Psoas muscle (tissue), 8 donors: ENCODE measurements at regions of chr2 and their contacts with region 1.

Region 1: GRCh38 chr2:219057709-219058540 is 2.8 kb downstream of the IHH start:
- DNase-seq: peak; percentile 72 to 86
- ATAC-seq: peak; percentile 92 to 97 (median 96)
- H3K4me3 ChIP-seq: peak overlapping the region; percentile 19
- H3K27ac ChIP-seq: no peak overlapping the region
- H3K4me1 ChIP-seq: peaks cover 28% of the 10 kb centered on the region
- H3K27me3 ChIP-seq: peaks cover 0 to 88% (median 23%) of the 10 kb centered on the region in 3 donors
- CTCF ChIP-seq: peak; percentile 95

Region 2: GRCh38 chr2:218959141-218959731 is 98.7 kb before region 1 on chr2 and contains the start of gene CDK5R2:
- intact Hi-C with region 1: no loop called
- DNase-seq: peak; percentile 69 to 85
- ATAC-seq: peak; percentile 89 to 97 (median 96)
- H3K4me3 ChIP-seq: peak within 1 kb of the TSS; percentile 61
- H3K27ac ChIP-seq: no peak within 1 kb of the TSS
- H3K4me1 ChIP-seq: peaks cover 6% of the 10 kb centered on the region
- H3K27me3 ChIP-seq: peaks cover 0 to 91% (median 36%) of the 10 kb centered on the region in 3 donors
- CTCF ChIP-seq: no peak
- total RNA-seq, gene CDK5R2: not detected

Region 3: DNA sequence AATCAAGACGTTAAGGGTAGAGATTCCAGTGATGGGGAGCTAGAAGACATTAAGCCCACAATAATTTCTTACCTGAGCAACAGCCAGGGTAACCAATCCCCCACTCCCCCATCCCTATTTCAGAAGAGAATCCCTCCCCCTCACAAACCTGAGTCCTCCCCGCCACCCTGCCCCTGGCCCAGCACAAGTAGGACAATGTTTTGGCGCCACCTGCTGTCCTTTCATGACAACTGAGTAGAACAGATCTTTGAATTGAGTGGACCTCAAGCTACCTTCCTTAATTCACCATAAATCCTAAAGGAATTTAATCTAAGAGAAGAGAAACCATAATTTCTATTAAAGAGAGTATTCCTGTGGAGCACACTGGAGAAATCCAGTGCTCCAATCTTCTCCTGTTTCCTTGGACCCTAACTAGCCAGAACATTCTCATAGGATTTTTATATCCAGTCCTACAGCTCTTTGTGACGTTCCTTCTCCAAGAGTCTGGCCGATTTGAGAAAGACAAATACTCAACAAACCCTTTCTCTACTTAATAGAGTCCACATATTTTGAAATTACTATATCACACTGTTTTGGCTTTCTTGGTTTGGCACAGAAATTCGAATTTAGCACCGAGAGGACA is 61.6 kb after region 1 on chr2:
- intact Hi-C with region 1: loop called (anchors 1 to 2 kb)
- DNase-seq: peak; percentile 50 to 77
- ATAC-seq: peak; percentile 58 to 85 (median 74)
- H3K4me3 ChIP-seq: no peak overlapping the region
- H3K27ac ChIP-seq: no peak overlapping the region
- H3K4me1 ChIP-seq: no peaks in the 10 kb centered on the region
- H3K27me3 ChIP-seq: no peaks in the 10 kb centered on the region
- CTCF ChIP-seq: peak; percentile 67

Region 4: DNA sequence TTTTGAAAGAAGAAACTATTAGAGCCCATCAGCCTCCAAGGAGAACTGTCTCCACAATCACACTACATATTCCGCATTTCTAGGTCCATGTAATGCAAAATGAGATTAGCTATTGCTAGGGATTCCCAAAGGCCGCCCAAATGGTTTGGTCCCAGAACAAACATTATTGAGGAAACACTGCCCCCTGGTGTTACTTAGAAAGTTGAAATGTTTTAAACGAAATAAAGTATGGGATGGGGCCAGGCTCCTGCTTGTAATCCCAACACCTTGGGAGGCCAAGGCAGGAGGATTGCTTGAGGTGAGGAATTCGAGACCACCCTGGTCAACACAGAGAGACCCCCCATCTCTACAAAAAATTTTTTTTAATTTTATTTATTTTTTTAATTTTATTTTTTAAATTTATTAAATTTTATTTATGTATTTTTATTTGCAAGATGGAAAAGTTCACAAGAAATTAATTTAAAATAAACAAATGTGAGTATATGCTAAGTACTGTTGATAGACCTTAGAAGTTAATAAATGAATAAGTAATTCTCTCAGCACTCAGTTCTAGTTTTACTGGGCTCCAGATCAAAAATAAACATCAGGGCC is 97.2 kb after region 1 on chr2:
- intact Hi-C with region 1: loop called in 1 of 2 experiments (anchors 2 kb)
- DNase-seq: no peak
- ATAC-seq: peak in 3 of 4 donors; percentile 64 to 69 (median 66)
- H3K4me3 ChIP-seq: no peak overlapping the region
- H3K27ac ChIP-seq: no peak overlapping the region
- H3K4me1 ChIP-seq: peaks cover 5% of the 10 kb centered on the region
- H3K27me3 ChIP-seq: no peaks in the 10 kb centered on the region
- CTCF ChIP-seq: peak; percentile 63

Region 5: GRCh38 chr2:219308142-219309093 is 250.5 kb after region 1 on chr2:
- intact Hi-C with region 1: loop called (anchors 10 kb)
- DNase-seq: peak; percentile 71 to 78
- ATAC-seq: peak; percentile 74 to 86 (median 84)
- H3K4me3 ChIP-seq: no peak overlapping the region
- H3K27ac ChIP-seq: no peak overlapping the region
- H3K4me1 ChIP-seq: no peaks in the 10 kb centered on the region
- H3K27me3 ChIP-seq: peaks cover 0 to 88% (median 6%) of the 10 kb centered on the region in 3 donors
- CTCF ChIP-seq: no peak

Region 6: GRCh38 chr2:219362524-219363164 is 304.7 kb after region 1 on chr2:
- intact Hi-C with region 1: no loop called
- DNase-seq: peak; percentile 78 to 90
- ATAC-seq: peak; percentile 97 to 99 (median 98)
- H3K4me3 ChIP-seq: no peak overlapping the region
- H3K27ac ChIP-seq: peak overlapping the region; percentile 76
- H3K4me1 ChIP-seq: peaks cover 25% of the 10 kb centered on the region
- H3K27me3 ChIP-seq: peaks cover 0 to 13% (median 5%) of the 10 kb centered on the region in 3 donors
- CTCF ChIP-seq: no peak